HEK293 (cell line): ENCODE measurements at regions of chr15 and their contacts with region 1.

Region 1: GRCh38 chr15:73915079-73915478 is 11.2 kb upstream of the LOXL1 start:
- H3K4me3 ChIP-seq: no peak overlapping the region
- H3K27ac ChIP-seq: no peak overlapping the region
- H3K4me1 ChIP-seq: no peaks in the 10 kb centered on the region
- CTCF ChIP-seq: no peak

Region 2: GRCh38 chr15:73550190-73550589 is 364.9 kb before region 1 on chr15:
- CTCF ChIA-PET with region 1: no interaction called
- POLR2A ChIA-PET with region 1: no interaction called
- H3K4me3 ChIP-seq: no peak overlapping the region
- H3K27ac ChIP-seq: no peak overlapping the region
- H3K4me1 ChIP-seq: no peaks in the 10 kb centered on the region
- CTCF ChIP-seq: no peak

Region 3: GRCh38 chr15:73771380-73772045 is 143.6 kb before region 1 on chr15:
- CTCF ChIA-PET with region 1: no interaction called
- POLR2A ChIA-PET with region 1: no interaction called
- H3K4me3 ChIP-seq: no peak overlapping the region
- H3K27ac ChIP-seq: no peak overlapping the region
- H3K4me1 ChIP-seq: no peaks in the 10 kb centered on the region
- CTCF ChIP-seq: no peak

Region 4: GRCh38 chr15:73865904-73866303 is 49.2 kb before region 1 on chr15:
- CTCF ChIA-PET with region 1: interaction called, 3 read pairs
- POLR2A ChIA-PET with region 1: interaction called, 10 read pairs
- H3K4me3 ChIP-seq: no peak overlapping the region
- H3K27ac ChIP-seq: no peak overlapping the region
- H3K4me1 ChIP-seq: peaks cover under 1% of the 10 kb centered on the region; the same call in 1 of the 2 replicates
- CTCF ChIP-seq: no peak